ENCODE measurements at regions of chr3 and their contacts with region 1.

Region 1: GRCh38 chr3:185767002-185767688 is 57.7 kb downstream of the IGF2BP2 start:
- DNase-seq: no peak
- ATAC-seq: no peak
- H3K4me3 ChIP-seq: no peak overlapping the region
- H3K27ac ChIP-seq: no peak overlapping the region
- H3K4me1 ChIP-seq: peaks cover 0 to 35% of the 10 kb centered on the region in 2 donors
- H3K27me3 ChIP-seq: no peaks in the 10 kb centered on the region
- CTCF ChIP-seq: no peak

Region 2: GRCh38 chr3:185677146-185677829 is 89.9 kb before region 1 on chr3:
- intact Hi-C with region 1: loop called in 1 of 2 experiments (anchors 5 kb)
- DNase-seq: peak in 2 of 4 donors; percentile 43 to 68
- ATAC-seq: peak; percentile 93
- H3K4me3 ChIP-seq: no peak overlapping the region
- H3K27ac ChIP-seq: no peak overlapping the region
- H3K4me1 ChIP-seq: no peaks in the 10 kb centered on the region
- H3K27me3 ChIP-seq: no peaks in the 10 kb centered on the region
- CTCF ChIP-seq: peak; percentile 63 to 68

Region 3: DNA sequence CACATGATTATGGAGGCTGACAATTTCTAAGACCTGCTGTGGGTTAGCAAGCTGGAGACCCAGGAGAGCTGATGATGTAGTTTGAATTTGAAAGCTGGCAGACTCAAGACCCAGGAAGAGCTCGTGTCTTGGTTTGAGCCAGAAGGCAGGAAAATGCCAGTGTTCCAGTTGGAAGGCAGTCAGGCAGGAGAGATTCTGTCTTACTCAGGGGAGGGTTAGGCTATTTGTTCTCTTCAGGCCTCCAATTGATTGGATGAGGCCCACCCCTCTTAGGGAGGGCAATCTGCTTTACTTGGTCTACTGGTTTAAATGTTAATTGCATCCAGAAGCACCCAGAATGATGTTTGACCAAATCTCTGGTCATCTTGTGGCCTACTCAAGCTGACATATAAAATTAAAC is 98.1 kb after region 1 on chr3:
- intact Hi-C with region 1: no loop called
- DNase-seq: no peak
- ATAC-seq: no peak
- H3K4me3 ChIP-seq: no peak overlapping the region
- H3K27ac ChIP-seq: no peak overlapping the region
- H3K4me1 ChIP-seq: no peaks in the 10 kb centered on the region
- H3K27me3 ChIP-seq: no peaks in the 10 kb centered on the region
- CTCF ChIP-seq: no peak

Region 4: GRCh38 chr3:186044973-186045372 is 277.8 kb after region 1 on chr3:
- intact Hi-C with region 1: no loop called
- DNase-seq: no peak
- ATAC-seq: peak; percentile 41
- H3K4me3 ChIP-seq: no peak overlapping the region
- H3K27ac ChIP-seq: no peak overlapping the region
- H3K4me1 ChIP-seq: no peaks in the 10 kb centered on the region
- H3K27me3 ChIP-seq: no peaks in the 10 kb centered on the region
- CTCF ChIP-seq: no peak

Region 5: DNA sequence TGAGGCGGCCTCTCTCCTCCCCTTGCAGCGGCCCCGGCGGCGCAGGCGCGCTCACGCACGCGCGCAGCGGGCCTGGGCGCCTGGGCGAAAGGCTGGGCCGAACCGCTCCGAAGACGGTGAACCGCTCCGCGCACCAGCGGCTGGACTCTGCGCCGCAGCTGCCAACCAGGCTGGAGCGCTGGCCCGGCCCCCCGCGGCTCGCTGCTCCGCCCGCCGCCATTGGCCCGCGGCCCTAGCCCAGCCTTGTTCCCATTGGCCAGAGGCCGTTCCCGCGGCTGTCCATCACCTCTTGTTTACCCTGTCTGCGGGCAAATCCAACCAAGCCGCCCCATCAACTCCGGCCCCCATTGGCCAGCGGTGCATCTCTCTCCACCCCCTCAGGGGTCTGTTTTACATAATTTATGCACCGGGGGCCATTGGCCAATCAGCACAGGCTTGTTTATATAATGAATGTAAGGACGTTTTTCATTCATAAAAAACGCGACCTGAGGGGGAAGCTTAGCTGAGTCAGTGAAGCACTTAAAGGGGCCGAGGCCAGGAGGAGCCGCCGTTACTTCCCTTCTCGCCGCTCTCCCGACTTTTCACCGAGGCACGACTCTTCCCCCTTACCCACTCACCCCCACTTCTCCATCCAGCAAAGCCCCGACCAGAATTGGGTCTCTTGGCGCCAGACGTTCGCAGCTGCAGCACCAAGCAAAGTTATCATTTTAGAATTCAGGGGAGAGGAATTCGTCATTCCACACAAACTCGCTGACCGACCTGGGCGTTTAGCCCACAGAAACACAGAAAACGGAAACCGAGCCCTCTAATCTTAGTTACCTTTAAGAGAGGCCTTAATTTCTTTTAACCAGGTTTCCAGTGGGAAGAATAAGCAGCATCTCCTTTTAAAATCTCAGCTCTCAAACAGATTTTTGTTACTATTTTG is 342.1 kb after region 1 on chr3 and contains the start of gene ETV5:
- intact Hi-C with region 1: no loop called
- DNase-seq: peak; percentile 98 to 99 (median 98)
- ATAC-seq: peak; percentile 91
- H3K4me3 ChIP-seq: peak within 1 kb of the TSS; percentile 77 to 79
- H3K27ac ChIP-seq: peak within 1 kb of the TSS; percentile 81 to 83
- H3K4me1 ChIP-seq: peaks cover 14 to 38% of the 10 kb centered on the region in 2 donors
- H3K27me3 ChIP-seq: peaks cover 5 to 90% of the 10 kb centered on the region in 2 donors
- CTCF ChIP-seq: peak in 1 of 2 donors; percentile 32
- polyA plus RNA-seq, gene ETV5: 245 to 332 (median 276) TPM